ENCODE measurements at regions of chr18 and their contacts with region 1.

Region 1: DNA sequence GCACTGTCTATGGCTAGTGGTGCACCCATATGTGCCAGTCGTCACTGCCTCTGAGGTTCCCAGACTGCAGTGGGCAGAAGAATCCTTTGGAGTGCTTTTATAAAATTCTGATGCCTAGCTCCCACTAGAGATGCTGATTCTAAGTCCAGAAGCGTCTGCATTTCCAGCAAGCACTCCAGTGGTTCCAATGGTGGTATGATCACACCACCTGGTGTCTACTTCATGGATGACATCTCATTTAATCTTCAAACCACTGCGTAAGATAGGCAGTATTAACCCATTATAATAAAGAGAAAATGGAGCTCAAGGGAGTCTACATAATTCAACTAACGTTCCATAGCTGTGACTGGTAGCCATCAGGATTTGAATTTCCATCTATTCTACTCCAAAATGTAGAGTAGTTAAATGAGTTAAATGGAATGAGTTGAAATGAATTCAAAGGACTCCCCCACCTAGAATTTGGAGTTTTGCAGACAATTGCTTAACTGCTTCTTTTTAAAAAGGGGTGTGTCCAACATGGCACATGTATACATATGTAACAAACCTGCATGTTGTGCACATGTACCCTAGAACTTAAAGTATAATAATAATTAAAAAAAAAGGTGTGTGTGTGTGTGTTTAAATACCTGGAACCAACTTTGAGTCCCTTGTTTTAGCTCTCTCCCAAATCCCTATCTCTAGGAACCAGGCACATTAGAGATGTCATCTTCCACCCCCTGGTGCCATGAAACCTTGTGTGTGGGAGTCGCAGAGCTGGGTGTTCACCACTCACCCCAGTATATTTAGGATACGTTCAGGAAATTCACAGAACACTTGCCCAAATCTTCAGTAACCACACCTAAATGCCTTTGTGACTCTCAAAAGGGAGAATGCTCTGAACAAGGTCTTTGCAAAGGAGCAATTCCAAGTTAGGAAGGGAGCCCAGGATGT is 14.1 kb downstream of the LAMA3 start:
- H3K4me3 ChIP-seq: no peak overlapping the region
- H3K27ac ChIP-seq: no peak overlapping the region
- H3K4me1 ChIP-seq: no peaks in the 10 kb centered on the region
- CTCF ChIP-seq: peak; percentile 65; the same call in 1 of the 2 replicates

Region 2: DNA sequence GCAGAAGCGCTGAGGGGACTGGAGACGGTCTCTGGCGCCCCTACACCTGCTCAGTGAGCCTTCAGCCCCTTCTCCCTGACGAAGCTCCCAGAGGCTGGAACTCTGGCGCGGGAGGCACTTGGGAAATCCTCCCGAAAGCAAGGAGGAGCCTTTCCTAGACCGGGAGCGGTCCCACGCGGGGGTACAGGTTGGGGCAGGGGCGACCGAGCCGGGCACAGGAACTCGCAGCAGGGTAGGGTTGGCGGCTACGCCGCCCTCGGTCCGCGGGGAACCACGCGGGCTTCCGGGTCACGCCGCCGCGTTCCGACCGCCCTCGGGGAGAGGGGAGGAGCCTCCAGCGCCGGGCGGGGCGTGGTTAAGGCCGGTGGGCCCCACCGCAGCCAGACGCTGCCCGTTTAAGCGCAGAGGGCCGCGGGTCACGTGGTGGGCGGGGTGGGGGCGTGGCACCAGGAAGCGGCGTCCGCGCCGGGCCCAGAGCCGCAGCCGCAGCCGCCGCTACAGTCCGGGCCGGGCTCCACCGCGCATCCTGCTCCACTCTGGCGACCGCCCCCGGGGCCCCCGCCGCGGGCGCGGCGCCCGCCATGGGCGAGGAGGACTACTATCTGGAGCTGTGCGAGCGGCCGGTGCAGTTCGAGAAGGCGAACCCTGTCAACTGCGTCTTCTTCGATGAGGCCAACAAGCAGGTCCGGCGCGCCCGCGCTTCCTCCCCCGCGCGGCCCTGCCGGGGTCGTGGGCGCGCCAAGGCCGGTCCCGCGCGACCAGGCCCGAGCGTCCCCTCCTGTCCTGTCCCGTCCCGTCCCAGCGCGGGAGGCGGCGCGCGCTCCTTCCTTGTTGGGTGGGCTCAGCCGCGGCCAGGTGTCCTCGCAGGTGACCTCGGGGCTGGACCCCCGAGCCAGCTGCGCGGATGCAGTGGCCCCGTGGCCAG is 200.0 kb before region 1 on chr18 and contains the start of gene RMC1:
- CTCF ChIA-PET with region 1: interaction called, 21 read pairs
- POLR2A ChIA-PET with region 1: no interaction called
- H3K4me3 ChIP-seq: peak within 1 kb of the TSS; percentile 86
- H3K27ac ChIP-seq: peak within 1 kb of the TSS; percentile 48; the same call in 1 of the 2 replicates
- H3K4me1 ChIP-seq: no peaks in the 10 kb centered on the region
- CTCF ChIP-seq: peak; percentile 82

Region 3: GRCh38 chr18:23612435-23613085 is 90.8 kb before region 1 on chr18:
- CTCF ChIA-PET with region 1: interaction called, 10 read pairs
- POLR2A ChIA-PET with region 1: no interaction called
- H3K4me3 ChIP-seq: no peak overlapping the region
- H3K27ac ChIP-seq: no peak overlapping the region
- H3K4me1 ChIP-seq: no peaks in the 10 kb centered on the region
- CTCF ChIP-seq: no peak

Region 4: DNA sequence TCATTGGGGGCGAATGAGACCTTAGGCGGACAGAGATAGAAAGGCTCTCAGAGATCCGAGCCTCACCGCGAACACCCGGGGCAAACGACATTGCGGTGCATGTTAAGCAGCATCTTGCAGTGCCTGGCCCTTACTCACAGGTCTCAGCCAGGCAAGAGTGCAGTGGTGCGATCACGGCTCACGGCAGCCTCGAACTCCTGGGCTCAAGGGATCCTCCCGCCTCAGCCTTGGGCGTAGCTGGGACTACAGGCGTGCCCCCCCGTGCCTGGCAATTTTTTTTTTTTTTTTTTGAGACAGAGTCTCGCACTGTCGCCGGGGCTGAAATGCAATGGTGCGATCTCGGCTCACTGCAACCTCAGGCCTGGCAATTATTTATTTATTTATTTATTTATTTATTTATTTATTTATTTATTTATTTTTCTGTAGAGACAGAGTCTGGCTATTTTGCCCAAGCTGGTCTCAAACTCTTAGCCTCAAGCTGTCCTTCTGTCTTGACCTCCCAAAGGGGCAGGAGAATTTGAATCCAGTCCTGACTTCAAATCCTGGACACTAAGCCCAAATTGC is 12.7 kb before region 1 on chr18:
- CTCF ChIA-PET with region 1: interaction called, 24 read pairs
- POLR2A ChIA-PET with region 1: no interaction called
- H3K4me3 ChIP-seq: peak overlapping the region; percentile 60
- H3K27ac ChIP-seq: peak overlapping the region; percentile 91; the same call in 1 of the 2 replicates
- H3K4me1 ChIP-seq: peaks cover 14% of the 10 kb centered on the region
- CTCF ChIP-seq: no peak

Region 5: DNA sequence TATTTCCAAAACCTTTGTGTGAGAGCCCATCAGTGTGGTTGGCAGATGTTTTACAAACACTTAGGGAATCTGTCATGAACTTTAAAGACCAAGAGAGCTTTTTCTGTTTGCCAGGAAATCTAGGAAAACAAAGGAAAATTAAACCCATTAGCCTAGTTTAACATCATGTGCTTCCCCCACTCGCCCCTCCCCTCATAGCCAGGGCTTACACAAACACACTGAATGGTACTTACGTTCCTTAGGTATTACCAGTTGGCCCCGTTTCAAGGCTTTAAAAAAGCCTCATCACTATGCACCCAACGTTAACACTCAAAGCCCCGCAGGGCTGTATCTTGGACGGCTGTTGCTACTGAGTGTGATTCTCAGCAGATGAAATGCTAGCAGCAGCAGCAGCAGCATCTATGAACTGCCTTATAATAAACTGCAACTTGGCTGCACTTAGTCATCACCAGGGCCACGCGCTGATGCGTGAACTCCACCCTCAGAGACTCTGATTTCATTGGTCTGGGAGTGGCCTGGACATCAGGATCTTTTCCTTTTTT is 291.1 kb after region 1 on chr18:
- CTCF ChIA-PET with region 1: no interaction called
- POLR2A ChIA-PET with region 1: no interaction called
- H3K4me3 ChIP-seq: no peak overlapping the region
- H3K27ac ChIP-seq: peak overlapping the region; percentile 8; the same call in 1 of the 2 replicates
- H3K4me1 ChIP-seq: peaks cover 10% of the 10 kb centered on the region
- CTCF ChIP-seq: no peak